ENCODE measurements at regions of chr1 and their contacts with region 1.

Region 1: DNA sequence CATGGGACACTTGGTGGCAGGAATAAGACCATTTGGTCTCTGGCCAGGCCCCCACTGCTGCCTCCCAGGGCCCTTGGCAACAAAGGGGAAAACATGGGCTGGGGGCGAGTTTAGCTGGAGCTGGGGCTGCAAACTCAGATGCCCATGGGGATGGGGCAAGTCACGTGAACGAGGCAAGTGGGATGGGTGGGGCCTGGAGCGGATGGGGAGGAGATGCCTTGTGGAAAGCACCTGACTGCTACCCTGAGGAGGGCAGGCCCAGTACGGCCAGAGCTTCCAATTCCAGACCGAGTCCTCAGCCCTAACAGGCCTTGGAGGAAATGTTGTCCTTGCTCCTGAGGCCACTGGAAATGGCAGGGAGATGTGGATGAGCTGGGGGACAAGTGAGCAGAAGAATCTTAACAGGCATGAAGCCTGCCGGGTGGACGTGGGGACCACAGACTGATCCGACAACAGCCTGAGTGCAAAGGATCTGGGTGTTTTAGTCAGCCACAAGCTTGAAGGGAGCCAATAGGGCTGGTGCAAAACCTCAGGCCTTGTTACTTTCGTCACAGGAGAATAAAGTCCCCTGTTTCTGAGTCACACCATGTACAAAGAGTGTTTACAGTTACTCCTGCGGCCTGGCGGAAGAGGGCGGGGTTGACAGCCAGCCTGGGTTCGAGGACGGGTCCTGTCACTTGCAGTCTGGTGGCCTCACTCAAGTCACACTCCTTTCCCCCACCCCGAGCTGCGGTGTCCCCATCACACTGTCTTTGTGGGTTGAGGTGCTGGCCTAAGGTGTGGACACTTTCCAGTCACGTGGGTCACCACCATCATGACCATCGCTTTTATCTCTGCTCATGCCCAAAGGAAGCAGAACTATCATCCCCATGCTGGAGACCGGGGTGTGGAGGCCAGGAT is 19.1 kb downstream of the RUNX3 start:
- DNase-seq: peak; percentile 78
- ATAC-seq: peak; percentile 89
- H3K4me3 Mint-ChIP-seq: peak overlapping the region; percentile 61
- H3K27ac Mint-ChIP-seq: peak overlapping the region; percentile 95
- H3K4me1 Mint-ChIP-seq: peaks cover 41% of the 10 kb centered on the region
- H3K27me3 Mint-ChIP-seq: no peaks in the 10 kb centered on the region

Region 2: GRCh38 chr1:24894002-24894401 is 17.0 kb before region 1 on chr1:
- POLR2A ChIA-PET with region 1: no interaction called
- DNase-seq: no peak
- ATAC-seq: no peak
- H3K4me3 Mint-ChIP-seq: no peak overlapping the region
- H3K27ac Mint-ChIP-seq: no peak overlapping the region
- H3K4me1 Mint-ChIP-seq: peaks cover 7% of the 10 kb centered on the region
- H3K27me3 Mint-ChIP-seq: peaks cover 5% of the 10 kb centered on the region

Region 3: DNA sequence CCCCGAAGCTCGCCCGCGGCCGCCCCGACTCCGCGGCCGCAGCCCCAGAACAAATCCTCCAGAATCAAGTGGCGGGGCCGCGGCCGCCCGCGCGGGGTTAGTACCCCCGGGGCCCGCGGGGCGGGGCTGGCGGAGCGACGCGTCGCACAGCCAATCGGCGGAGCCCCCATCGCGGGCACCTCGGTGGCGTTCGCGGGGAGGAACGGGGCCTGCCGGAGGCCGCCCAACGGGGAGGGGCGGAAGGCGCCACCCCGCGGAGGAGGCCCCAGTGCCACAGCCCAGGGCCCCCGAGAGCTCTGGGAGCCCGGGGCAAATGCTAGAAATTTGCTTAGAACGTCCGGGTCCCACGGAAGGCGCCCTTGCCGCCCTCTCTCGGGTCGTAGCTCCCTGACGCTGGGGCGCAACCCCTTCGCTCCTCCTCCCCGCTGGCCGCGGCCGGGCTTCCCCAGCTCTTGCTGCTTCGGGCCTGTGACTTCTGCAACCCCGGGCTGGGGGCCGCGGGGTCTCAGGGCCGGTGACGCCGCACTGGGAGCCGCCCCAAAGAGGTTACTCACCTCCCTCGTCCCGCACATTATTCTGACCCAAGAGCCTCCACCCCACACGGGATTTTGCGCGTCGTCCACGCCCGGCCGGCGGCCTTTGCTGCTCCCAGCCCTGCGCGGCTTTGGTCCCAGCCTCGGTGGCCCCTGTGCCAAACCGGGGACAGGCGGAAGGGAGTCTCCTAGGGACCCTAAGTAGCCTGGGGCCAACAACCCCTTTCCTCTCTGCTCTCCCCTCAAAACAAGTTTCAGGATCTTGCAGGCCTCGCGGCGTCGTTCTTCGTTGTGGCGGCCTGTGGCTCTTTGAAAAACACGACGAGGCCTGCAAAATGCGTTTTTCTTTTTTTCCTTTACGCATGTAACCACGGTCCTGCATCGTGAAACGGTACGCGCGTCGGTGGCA is 19.5 kb after region 1 on chr1 and contains the start of gene RUNX3:
- POLR2A ChIA-PET with region 1: interaction called, 14 read pairs
- DNase-seq: peak; percentile 95
- ATAC-seq: peak; percentile 78
- H3K4me3 Mint-ChIP-seq: peak within 1 kb of the TSS; percentile 92
- H3K27ac Mint-ChIP-seq: peak within 1 kb of the TSS; percentile 91
- H3K4me1 Mint-ChIP-seq: peaks cover 60% of the 10 kb centered on the region
- H3K27me3 Mint-ChIP-seq: no peaks in the 10 kb centered on the region
- total RNA-seq, gene RUNX3: 172 TPM